ENCODE measurements at regions of chr2 and their contacts with region 1.

Region 1: GRCh38 chr2:160994141-160995002 is 165.9 kb upstream of the TANK start:
- ATAC-seq: peak; percentile 91 to 100 (median 99)
- H3K4me3 ChIP-seq: no peak overlapping the region
- H3K27ac ChIP-seq: no peak overlapping the region
- H3K4me1 ChIP-seq: peaks cover 7 to 11% of the 10 kb centered on the region in 2 donors

Region 2: DNA sequence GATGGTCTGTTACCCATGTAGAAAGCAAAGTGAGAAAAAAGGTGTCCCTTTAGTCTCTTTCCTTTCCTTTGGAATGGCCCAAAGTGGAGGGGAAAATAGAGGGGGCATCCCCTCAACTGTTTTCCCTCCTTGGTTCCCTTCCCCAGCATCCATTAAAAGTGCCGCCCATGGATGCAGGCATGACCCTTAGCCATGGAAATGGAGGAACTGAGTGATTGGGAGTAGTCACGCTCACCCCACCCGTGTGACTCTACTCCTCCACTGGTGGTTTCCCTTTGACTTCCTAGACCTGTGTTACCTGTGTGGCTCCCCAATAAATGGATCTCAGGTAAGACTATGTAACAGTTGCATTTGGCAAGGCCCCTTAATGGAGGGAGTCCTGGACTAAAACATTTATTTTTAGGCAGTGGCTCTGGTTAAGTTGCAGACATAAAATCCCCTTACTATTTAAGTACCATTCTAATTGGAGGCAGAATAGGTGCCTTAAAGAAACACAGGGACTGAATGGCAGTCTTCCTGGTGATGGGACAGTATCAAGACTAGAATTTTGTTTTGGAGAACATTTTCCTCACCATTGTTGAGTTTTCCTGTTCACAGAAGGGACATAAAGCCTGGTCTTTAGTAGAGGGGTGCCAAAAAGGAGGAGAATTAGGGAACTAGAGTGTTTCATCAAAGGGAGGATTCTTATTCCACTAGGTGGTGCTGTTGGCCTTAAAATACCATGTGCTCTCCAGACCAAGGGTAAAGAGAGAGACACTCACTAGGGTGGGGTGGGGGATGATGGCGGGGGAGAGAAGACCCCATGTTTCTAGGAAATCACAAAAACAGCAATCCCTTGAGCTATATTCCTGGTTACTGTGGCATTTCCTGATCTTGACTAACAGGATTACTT is 906.3 kb before region 1 on chr2:
- in situ Hi-C with region 1: loop called in 1 of 9 experiments (anchors 25 kb)
- ATAC-seq: peak in 3 of 8 experiments; percentile 23 to 76 (median 42)
- H3K4me3 ChIP-seq: no peak overlapping the region
- H3K27ac ChIP-seq: no peak overlapping the region
- H3K4me1 ChIP-seq: no peaks in the 10 kb centered on the region

Region 3: DNA sequence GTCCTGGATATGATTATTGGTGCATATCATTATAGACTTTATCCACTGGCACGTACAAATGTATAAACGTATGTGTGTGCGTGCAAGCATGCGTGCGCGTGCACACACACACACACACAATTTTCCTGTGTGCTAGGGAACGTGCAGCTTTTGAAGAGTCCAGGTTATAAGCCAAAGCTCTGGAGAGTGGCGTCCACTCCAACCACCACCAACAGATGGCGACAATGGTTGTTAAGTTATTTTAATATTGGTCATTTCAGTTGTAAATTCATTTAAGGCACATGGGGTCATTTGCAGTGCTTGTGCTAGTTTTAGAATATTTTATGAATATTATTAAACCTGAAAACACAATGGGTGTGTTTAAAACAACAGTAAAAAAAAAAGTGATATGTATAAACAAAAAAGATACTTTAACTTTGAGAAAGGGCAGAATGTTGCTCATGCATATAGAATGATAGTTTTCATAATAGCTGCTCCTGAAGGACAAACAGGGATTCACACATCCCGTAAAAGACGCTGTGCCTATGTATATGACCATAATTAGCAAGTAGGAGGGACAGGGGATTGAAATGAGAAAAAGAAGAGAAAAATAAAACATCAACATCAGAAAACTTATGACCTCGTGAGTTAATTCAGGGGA is 670.1 kb before region 1 on chr2:
- in situ Hi-C with region 1: loop called in 1 of 9 experiments (anchors 25 kb)
- ATAC-seq: peak in 4 of 8 experiments; percentile 48 to 81 (median 71)
- H3K4me3 ChIP-seq: no peak overlapping the region
- H3K27ac ChIP-seq: no peak overlapping the region
- H3K4me1 ChIP-seq: peaks cover 8 to 9% of the 10 kb centered on the region in 2 donors

Region 4: DNA sequence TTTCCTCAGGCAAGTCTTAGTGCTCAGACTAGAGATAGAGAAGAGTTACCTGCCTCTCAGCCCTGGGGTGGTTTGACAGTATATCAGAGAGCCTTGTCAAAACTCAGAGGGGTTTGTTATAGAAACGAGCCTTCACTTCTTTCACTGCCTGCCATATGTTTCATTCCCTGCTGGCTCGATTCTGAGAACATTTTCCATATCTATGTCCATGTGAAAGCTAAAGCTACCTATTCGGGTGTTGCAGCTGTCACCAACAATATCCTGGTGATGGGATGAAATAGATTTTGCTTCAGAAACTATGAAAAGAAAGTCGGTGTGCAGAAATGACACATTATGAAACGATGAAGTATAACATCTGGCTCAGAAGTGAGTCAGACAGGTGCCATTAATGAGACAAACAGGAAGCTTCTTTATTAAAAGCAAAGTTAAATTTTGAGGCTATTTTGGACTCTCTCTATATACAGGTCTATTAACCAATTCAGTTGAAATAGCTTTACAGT is 109.7 kb after region 1 on chr2:
- in situ Hi-C with region 1: no loop called
- ATAC-seq: no peak
- H3K4me3 ChIP-seq: no peak overlapping the region
- H3K27ac ChIP-seq: no peak overlapping the region
- H3K4me1 ChIP-seq: peaks cover 0 to 10% of the 10 kb centered on the region in 2 donors